Heart left ventricle (tissue), 16 donors: ENCODE measurements at regions of chr7 and their contacts with region 1.

Region 1: DNA sequence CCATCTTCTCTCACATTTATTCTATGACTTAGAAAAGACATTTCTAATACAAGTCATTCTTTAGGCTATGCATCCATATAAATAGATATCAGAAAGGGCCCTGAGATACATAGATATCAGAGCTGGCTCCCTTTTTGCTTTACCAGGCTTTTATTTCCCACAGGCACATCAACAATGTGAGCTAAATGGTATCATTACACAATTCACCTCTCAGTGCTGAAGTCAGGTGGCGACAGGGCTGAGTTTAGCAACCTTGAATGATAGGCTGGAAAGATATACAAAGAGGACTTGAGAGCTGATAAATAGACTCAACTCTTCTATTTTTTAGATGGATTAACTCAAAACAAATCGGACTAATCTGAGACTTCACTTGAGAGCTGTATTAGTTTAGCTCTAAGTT is 189.2 kb upstream of the COL1A2 start:
- DNase-seq: no peak
- ATAC-seq: no peak
- H3K4me3 ChIP-seq: no peak overlapping the region
- H3K27ac ChIP-seq: no peak overlapping the region
- H3K4me1 ChIP-seq: no peaks in the 10 kb centered on the region
- H3K27me3 ChIP-seq: no peaks in the 10 kb centered on the region
- CTCF ChIP-seq: no peak
- POLR2A ChIP-seq: no peak

Region 2: GRCh38 chr7:93877742-93878141 is 327.8 kb before region 1 on chr7:
- intact Hi-C with region 1: no loop called
- DNase-seq: no peak
- ATAC-seq: no peak
- H3K4me3 ChIP-seq: no peak overlapping the region
- H3K27ac ChIP-seq: no peak overlapping the region
- H3K4me1 ChIP-seq: no peaks in the 10 kb centered on the region
- H3K27me3 ChIP-seq: no peaks in the 10 kb centered on the region
- CTCF ChIP-seq: no peak
- POLR2A ChIP-seq: no peak

Region 3: DNA sequence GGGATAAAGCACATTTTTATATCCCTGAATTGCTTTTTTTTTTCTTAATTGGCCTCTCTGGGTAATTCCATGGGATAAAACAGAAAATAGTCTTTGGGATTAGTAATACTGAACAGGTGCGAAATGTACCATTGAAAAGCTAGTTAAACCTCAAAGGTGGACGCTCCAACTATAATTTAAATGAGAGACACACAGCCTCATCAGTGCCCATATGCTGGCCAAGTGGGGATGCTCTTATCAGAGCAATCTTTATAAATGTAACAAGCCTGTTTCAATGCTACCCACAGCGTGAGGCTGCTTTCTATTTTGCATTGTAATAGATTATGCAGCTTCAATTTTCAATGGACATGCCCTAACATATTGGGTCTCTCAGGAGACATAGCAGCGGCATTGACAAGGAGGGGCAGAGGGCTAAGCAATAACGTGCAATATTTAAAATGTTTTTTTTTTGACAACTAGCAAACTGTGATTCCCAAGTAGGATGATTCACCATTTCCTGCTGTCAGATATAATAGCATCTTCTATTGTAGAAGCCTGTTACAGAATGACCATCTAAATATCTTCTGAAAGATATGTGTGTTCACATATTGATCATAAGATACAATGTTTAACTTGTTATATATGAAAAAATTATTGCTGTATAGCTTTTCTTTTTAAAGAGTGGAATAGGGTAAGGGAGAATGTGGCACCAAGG is 110.1 kb before region 1 on chr7:
- intact Hi-C with region 1: no loop called
- DNase-seq: no peak
- ATAC-seq: no peak
- H3K4me3 ChIP-seq: no peak overlapping the region
- H3K27ac ChIP-seq: no peak overlapping the region
- H3K4me1 ChIP-seq: no peaks in the 10 kb centered on the region
- H3K27me3 ChIP-seq: peaks cover 0 to 5% (median 0%) of the 10 kb centered on the region in 9 donors
- CTCF ChIP-seq: no peak
- POLR2A ChIP-seq: no peak

Region 4: DNA sequence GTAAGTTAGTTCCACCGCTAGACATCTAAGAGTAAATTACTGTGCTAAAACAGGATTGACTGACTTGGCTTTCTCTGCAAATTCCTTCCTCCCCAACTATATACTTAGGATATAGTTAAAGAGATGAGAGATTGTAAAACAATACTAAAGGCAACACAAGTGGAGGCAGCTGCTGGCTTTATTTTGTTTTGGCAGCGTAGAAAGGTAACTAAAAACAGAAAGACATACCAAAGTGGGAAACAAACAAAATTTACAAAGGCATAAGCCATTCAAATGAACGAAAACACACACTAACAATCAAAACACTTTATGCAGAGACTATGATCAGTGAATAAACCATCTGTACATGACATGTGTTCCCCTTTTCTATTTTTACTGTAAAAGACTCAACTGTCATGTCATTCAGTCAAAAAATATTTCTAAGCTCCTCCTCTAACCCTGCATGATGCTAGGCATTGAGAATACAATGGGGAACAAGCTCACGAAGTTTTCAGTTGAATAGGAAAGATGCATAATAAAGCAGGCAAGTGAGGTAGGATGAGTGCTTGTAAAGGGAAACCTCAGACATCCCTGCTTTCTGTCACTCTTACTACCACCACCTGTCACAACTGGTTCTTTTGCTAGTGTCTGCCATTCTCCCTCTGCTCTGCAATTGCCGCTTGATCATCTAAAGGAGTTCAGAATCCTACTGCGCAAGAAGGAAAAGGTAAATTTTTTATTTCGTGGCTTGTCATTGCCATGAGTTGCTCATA is 124.9 kb after region 1 on chr7:
- intact Hi-C with region 1: loop called in 1 of 10 experiments (anchors 5 kb)
- DNase-seq: no peak
- ATAC-seq: no peak
- H3K4me3 ChIP-seq: no peak overlapping the region
- H3K27ac ChIP-seq: no peak overlapping the region
- H3K4me1 ChIP-seq: no peaks in the 10 kb centered on the region
- H3K27me3 ChIP-seq: no peaks in the 10 kb centered on the region
- CTCF ChIP-seq: no peak
- POLR2A ChIP-seq: no peak